ENCODE measurements at regions of chr3 and their contacts with region 1.

Region 1: DNA sequence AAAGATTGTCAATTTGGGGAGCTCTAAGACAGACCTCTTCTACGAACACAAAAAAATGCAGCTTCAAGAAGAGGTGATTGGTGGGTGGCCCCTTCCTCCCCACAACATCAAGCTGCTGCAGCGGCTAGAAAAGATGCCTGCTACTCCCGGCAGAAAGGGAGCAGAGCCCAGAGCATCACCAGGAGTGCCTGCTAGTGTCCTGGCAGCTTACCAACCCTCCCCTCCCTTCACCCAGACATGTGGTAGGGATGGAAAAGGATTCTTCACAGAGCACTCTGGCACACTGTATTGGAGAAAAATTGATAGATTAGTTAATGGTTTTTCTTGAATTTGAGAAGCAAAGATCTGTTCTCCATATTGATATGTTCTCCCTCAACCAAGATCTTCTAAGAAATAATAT is 10.8 kb downstream of the IP6K1 start:
- DNase-seq: no peak
- H3K4me3 ChIP-seq: no peak overlapping the region
- H3K27ac ChIP-seq: no peak overlapping the region
- H3K4me1 ChIP-seq: no peaks in the 10 kb centered on the region
- H3K27me3 ChIP-seq: no peaks in the 10 kb centered on the region
- CTCF ChIP-seq: no peak

Region 2: GRCh38 chr3:49733551-49733950 is 42.0 kb before region 1 on chr3:
- CTCF ChIA-PET with region 1: no interaction called
- dilution Hi-C with region 1: loop called (anchors 5 kb)
- in situ Hi-C with region 1: no loop called
- intact Hi-C with region 1: no loop called
- DNase-seq: no peak
- H3K4me3 ChIP-seq: no peak overlapping the region
- H3K27ac ChIP-seq: no peak overlapping the region
- H3K4me1 ChIP-seq: no peaks in the 10 kb centered on the region
- H3K27me3 ChIP-seq: no peaks in the 10 kb centered on the region
- CTCF ChIP-seq: no peak

Region 3: DNA sequence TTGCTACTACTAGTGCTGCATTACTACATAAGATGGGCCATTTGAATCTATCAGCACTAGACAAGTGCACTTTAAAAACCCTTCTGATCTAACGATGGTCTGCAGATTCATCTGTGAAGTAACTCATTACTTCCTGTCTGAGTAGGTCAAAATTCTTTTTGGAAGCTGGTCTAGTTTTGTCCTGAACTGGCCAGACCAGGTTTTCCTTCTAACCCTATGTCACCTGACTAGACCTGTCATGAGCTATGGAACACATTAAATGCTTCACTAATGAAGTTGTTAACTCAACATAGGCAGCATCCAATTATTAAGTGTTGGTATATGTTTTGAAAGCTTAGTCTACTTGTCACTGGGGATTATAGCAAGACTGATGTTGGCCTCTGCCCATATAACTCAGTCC is 303.1 kb after region 1 on chr3:
- CTCF ChIA-PET with region 1: no interaction called
- dilution Hi-C with region 1: no loop called
- in situ Hi-C with region 1: no loop called
- intact Hi-C with region 1: no loop called
- DNase-seq: peak; percentile 25
- H3K4me3 ChIP-seq: no peak overlapping the region
- H3K27ac ChIP-seq: no peak overlapping the region
- H3K4me1 ChIP-seq: no peaks in the 10 kb centered on the region
- H3K27me3 ChIP-seq: no peaks in the 10 kb centered on the region
- CTCF ChIP-seq: no peak